CD4-positive, alpha-beta T cell (primary cell): ENCODE measurements at regions of chr3 and their contacts with region 1.

Region 1: GRCh38 chr3:177185035-177185574 is 12.2 kb downstream of the TBL1XR1 start:
- DNase-seq: no peak
- ATAC-seq: no peak
- H3K4me3 ChIP-seq: no peak overlapping the region
- H3K4me3 Mint-ChIP-seq: peak overlapping the region; percentile 0
- H3K27ac ChIP-seq: no peak overlapping the region
- H3K27ac Mint-ChIP-seq: peak overlapping the region; percentile 3
- H3K4me1 ChIP-seq: peaks cover 61% of the 10 kb centered on the region
- H3K4me1 Mint-ChIP-seq: peaks cover 74% of the 10 kb centered on the region
- H3K27me3 ChIP-seq: no peaks in the 10 kb centered on the region
- H3K27me3 Mint-ChIP-seq: no peaks in the 10 kb centered on the region
- CTCF ChIP-seq: no peak

Region 2: DNA sequence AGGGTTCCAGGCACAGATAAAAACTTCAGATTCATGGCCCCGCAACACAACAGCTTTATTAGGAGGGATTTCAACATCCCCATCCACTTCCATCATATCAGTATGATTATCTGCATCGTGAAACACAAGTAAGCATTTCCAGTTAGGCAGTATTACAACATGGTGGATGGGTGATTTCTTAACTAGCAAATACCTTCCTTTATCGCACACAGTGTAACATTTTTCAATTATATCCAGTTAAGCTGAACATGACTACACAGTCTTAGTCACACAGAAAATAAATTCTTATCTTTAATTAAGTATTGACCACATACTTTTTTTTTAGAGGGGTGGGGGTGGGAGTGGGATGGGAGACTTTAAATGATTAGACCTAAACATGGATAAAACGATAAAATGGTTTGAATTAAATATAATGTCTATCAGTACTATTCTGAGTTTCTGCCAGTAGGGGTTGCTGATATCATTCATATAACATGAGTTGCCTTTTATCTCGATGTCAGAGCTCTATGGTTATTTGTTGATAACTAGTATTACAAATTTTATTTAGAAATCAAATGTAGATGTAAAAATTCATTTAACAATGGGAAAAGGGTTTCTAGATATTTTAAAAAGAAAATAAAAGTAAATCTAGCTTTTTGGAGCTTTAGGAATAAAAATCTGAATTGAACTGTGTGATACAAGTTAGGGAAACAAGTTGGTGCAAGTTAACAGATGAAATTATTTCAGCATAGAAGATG is 134.4 kb before region 1 on chr3:
- CTCF ChIA-PET with region 1: no interaction called
- POLR2A ChIA-PET with region 1: no interaction called
- intact Hi-C with region 1: no loop called
- DNase-seq: peak in 3 of 14 experiments; percentile 70 to 76 (median 75)
- ATAC-seq: peak; percentile 93
- H3K4me3 ChIP-seq: no peak overlapping the region
- H3K4me3 Mint-ChIP-seq: no peak overlapping the region
- H3K27ac ChIP-seq: no peak overlapping the region
- H3K27ac Mint-ChIP-seq: peak overlapping the region; percentile 70
- H3K4me1 ChIP-seq: no peaks in the 10 kb centered on the region
- H3K4me1 Mint-ChIP-seq: peaks cover 22% of the 10 kb centered on the region
- H3K27me3 ChIP-seq: no peaks in the 10 kb centered on the region
- H3K27me3 Mint-ChIP-seq: no peaks in the 10 kb centered on the region
- CTCF ChIP-seq: peak; percentile 75

Region 3: DNA sequence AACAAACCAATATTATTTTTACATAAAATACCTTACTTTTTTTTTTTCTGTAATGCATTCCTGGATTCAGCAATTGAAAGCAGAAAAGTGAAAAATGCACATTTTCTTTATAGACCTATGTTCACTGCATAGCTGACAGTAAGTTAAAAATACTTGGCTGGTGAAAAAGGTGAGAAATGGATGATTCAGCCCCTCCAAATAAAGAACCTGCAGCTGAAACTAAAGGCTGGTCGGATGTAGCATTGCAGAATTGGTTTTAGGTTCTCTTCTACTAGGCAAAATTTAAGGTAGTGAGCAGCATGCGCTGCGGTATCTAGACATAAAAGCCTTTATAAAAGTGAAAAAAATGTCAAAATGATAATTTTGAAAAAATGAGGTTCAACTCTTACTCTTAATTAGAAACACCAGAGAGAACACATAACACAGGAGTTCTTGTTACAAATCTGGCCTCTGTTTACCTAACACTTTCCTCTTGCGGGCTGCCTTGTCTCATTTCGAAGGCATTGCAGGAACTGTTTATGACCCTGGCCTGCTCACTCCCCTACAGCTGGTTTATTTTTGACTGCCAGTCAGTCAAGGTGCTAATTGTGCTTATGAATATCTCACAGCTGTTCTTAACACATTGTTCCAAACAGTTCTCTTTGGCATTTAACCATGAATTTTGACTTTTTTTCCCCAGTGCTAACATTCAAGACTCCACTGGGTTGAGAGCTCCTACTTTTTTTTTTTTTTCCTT is 467.6 kb after region 1 on chr3:
- CTCF ChIA-PET with region 1: no interaction called
- POLR2A ChIA-PET with region 1: no interaction called
- intact Hi-C with region 1: loop called in 1 of 2 experiments (anchors 10 kb)
- DNase-seq: peak in 1 of 14 experiments; percentile 40
- ATAC-seq: no peak
- H3K4me3 ChIP-seq: no peak overlapping the region
- H3K4me3 Mint-ChIP-seq: no peak overlapping the region
- H3K27ac ChIP-seq: no peak overlapping the region
- H3K27ac Mint-ChIP-seq: no peak overlapping the region
- H3K4me1 ChIP-seq: peaks cover 15% of the 10 kb centered on the region
- H3K4me1 Mint-ChIP-seq: peaks cover 16% of the 10 kb centered on the region
- H3K27me3 ChIP-seq: no peaks in the 10 kb centered on the region
- H3K27me3 Mint-ChIP-seq: no peaks in the 10 kb centered on the region
- CTCF ChIP-seq: no peak

Region 4: DNA sequence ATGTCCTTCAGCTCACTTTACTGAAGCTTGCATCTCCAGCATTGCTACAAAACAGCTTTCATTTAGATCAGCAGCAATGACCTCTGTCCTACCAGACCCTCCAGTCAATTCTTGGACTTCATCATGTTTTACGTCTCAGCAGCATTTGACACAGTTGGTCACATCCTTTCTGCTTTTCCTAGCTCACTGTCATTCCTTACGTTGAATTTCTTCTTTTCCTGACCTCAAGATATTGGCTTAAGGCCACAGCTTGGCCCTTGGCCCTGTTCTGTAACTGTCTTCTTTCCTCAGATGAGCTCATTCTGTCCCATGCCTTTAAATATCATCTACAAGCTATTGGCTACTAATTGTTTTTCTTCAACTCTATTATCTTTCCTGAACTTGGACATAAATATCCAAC is 774.9 kb after region 1 on chr3:
- CTCF ChIA-PET with region 1: no interaction called
- POLR2A ChIA-PET with region 1: no interaction called
- intact Hi-C with region 1: no loop called
- DNase-seq: no peak
- ATAC-seq: no peak
- H3K4me3 ChIP-seq: no peak overlapping the region
- H3K4me3 Mint-ChIP-seq: no peak overlapping the region
- H3K27ac ChIP-seq: no peak overlapping the region
- H3K27ac Mint-ChIP-seq: no peak overlapping the region
- H3K4me1 ChIP-seq: no peaks in the 10 kb centered on the region
- H3K4me1 Mint-ChIP-seq: no peaks in the 10 kb centered on the region
- H3K27me3 ChIP-seq: no peaks in the 10 kb centered on the region
- H3K27me3 Mint-ChIP-seq: no peaks in the 10 kb centered on the region
- CTCF ChIP-seq: no peak